Right ventricle myocardium superior (tissue), 1 donor: ENCODE measurements at regions of chr12 and their contacts with region 1.

Region 1: GRCh38 chr12:31659087-31659933 is at the start of gene ETFBKMT:
- DNase-seq: peak; percentile 91
- ATAC-seq: peak; percentile 98
- total RNA-seq, gene ETFBKMT: 7.0 TPM

Region 2: GRCh38 chr12:31759632-31760459 is 100.5 kb after region 1 on chr12:
- intact Hi-C with region 1: no loop called
- DNase-seq: no peak
- ATAC-seq: no peak

Region 3: GRCh38 chr12:31797230-31797872 is 138.0 kb after region 1 on chr12:
- intact Hi-C with region 1: no loop called
- DNase-seq: no peak
- ATAC-seq: no peak

Region 4: DNA sequence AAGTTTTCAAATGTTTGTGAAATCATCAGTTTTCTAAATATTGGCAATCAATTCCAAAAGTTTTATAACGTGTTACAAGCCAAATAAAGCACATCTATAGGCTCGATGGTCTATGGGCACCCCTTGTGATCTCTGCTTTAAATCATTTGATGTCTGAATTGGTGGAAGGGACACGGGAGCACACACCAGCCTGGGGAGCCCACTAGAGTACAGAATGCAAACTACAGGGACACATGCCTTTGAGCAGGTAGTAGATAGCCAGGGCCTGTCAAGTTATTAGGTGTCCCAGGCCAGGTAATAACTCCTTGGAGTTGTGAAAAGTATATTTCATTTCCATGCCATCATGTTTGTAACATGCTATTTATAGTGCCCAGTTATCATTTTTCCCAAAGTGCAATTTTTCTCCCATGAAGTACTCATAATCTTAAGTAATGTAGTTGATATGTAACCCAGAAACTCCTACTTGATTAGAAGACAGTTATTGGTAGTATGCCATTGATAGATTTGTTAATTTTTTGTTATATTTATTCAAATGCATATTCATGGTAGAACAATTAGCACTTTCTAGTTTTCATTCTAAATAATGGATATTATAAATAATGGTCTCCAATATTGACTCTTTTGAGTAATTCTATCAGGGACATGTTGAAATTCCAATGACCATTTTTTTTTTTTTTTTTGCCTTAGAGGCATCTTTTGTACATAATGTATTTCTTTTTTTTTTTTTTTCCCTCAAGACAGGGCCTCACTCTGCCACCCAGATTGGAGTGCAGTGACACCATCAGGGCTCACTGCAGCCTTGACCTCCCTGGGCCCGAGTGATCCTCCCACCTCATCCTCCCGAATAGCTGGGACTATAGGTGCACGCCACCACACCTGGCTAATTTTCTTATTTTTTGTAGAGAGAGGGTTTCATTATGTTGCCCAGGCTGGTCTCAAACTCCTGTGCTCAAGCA is 643.2 kb after region 1 on chr12:
- intact Hi-C with region 1: loop called (anchors 10 kb)
- DNase-seq: no peak
- ATAC-seq: peak; percentile 36

Region 5: DNA sequence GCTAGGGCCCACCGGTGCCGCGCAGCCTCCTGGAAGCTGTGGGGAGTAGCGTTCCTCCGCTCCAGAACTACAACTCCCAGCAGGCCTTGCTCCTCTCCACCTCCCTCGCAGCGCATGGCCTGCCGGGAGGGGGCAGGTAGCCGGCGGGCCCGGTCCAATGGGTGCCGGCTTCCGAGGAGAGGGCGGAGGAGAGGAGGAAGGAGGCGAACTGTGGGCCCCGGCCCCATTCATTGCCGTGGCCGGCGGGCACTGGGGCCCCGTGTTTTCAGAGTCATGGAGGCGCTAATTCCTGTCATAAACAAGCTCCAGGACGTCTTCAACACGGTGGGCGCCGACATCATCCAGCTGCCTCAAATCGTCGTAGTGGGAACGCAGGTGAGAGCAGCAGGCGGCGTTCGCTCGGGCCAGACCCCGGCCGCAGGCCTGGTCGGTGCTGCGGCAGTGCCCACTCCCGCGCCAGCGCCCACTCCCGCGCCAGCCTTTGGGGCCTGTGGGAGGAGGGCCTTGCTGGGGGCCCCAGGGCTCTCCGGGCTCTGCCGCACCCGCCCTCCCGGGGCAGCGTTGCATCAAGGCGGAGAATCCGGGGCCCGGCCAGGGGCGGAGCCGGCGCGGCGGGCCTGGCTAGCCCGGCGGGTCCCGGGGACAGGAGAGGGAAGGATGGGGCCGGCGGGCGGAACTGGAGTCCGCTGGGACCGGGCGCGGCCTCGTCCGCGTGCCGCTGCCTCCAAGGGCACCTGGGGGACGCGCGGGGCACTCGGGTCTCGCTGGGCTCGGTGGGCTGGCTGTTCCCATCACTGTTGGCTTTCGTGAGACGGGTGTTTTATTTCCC is 1020.0 kb after region 1 on chr12 and contains the start of gene DNM1L:
- intact Hi-C with region 1: loop called (anchors 10 kb)
- DNase-seq: peak; percentile 95
- ATAC-seq: peak; percentile 99
- total RNA-seq, gene DNM1L: 52.9 TPM